CD8-positive, alpha-beta T cell (primary cell): ENCODE measurements at regions of chr1 and their contacts with region 1.

Region 1: GRCh38 chr1:57474137-57474750 is 50.4 kb upstream of the DAB1 start:
- DNase-seq: no peak
- ATAC-seq: no peak
- H3K4me3 ChIP-seq: no peak overlapping the region
- H3K4me3 Mint-ChIP-seq: no peak overlapping the region
- H3K27ac ChIP-seq: no peak overlapping the region
- H3K27ac Mint-ChIP-seq: no peak overlapping the region
- H3K4me1 ChIP-seq: no peaks in the 10 kb centered on the region
- H3K4me1 Mint-ChIP-seq: no peaks in the 10 kb centered on the region
- H3K27me3 ChIP-seq: no peaks in the 10 kb centered on the region
- H3K27me3 Mint-ChIP-seq: no peaks in the 10 kb centered on the region
- CTCF ChIP-seq: no peak

Region 2: GRCh38 chr1:57520743-57521515 is 46.7 kb after region 1 on chr1:
- CTCF ChIA-PET with region 1: no interaction called
- POLR2A ChIA-PET with region 1: no interaction called
- intact Hi-C with region 1: loop called in 1 of 2 experiments (anchors 1 kb)
- DNase-seq: no peak
- ATAC-seq: no peak
- H3K4me3 ChIP-seq: no peak overlapping the region
- H3K4me3 Mint-ChIP-seq: no peak overlapping the region
- H3K27ac ChIP-seq: no peak overlapping the region
- H3K27ac Mint-ChIP-seq: no peak overlapping the region
- H3K4me1 ChIP-seq: no peaks in the 10 kb centered on the region
- H3K4me1 Mint-ChIP-seq: no peaks in the 10 kb centered on the region
- H3K27me3 ChIP-seq: no peaks in the 10 kb centered on the region
- H3K27me3 Mint-ChIP-seq: peaks cover 6% of the 10 kb centered on the region
- CTCF ChIP-seq: no peak

Region 3: DNA sequence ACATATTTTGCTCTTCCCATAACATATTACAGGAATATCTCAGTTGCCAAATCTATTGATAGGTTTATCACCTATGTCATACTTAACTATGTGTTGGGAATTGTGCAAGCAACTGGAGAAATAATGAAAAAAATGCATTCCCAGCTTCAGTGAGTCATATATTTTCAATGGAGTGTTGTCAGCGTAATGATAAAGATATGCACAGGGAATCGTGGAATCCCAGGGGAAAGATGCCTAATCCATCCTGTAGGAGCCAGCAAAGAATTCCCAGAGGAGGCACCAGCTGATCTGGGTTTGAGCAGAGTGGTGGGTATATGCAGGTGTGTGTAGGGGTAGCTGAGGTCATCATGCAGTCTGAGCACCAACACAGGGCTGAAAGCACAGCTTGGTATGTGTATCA is 162.9 kb after region 1 on chr1:
- CTCF ChIA-PET with region 1: no interaction called
- POLR2A ChIA-PET with region 1: no interaction called
- intact Hi-C with region 1: no loop called
- DNase-seq: no peak
- ATAC-seq: no peak
- H3K4me3 ChIP-seq: no peak overlapping the region
- H3K4me3 Mint-ChIP-seq: no peak overlapping the region
- H3K27ac ChIP-seq: no peak overlapping the region
- H3K27ac Mint-ChIP-seq: no peak overlapping the region
- H3K4me1 ChIP-seq: no peaks in the 10 kb centered on the region
- H3K4me1 Mint-ChIP-seq: no peaks in the 10 kb centered on the region
- H3K27me3 ChIP-seq: no peaks in the 10 kb centered on the region
- H3K27me3 Mint-ChIP-seq: peaks cover 9% of the 10 kb centered on the region
- CTCF ChIP-seq: no peak

Region 4: GRCh38 chr1:57788313-57788712 is 314.1 kb after region 1 on chr1:
- CTCF ChIA-PET with region 1: no interaction called
- POLR2A ChIA-PET with region 1: no interaction called
- intact Hi-C with region 1: no loop called
- DNase-seq: no peak
- ATAC-seq: no peak
- H3K4me3 ChIP-seq: no peak overlapping the region
- H3K4me3 Mint-ChIP-seq: no peak overlapping the region
- H3K27ac ChIP-seq: no peak overlapping the region
- H3K27ac Mint-ChIP-seq: no peak overlapping the region
- H3K4me1 ChIP-seq: no peaks in the 10 kb centered on the region
- H3K4me1 Mint-ChIP-seq: no peaks in the 10 kb centered on the region
- H3K27me3 ChIP-seq: no peaks in the 10 kb centered on the region
- H3K27me3 Mint-ChIP-seq: peaks cover 10% of the 10 kb centered on the region
- CTCF ChIP-seq: no peak